ENCODE measurements at regions of chr17 and their contacts with region 1.

Region 1: GRCh38 chr17:60231234-60231633 is 81.5 kb downstream of the CA4 start:
- DNase-seq: no peak
- ATAC-seq: no peak
- H3K4me3 Mint-ChIP-seq: no peak overlapping the region
- H3K27ac Mint-ChIP-seq: no peak overlapping the region
- H3K4me1 Mint-ChIP-seq: no peaks in the 10 kb centered on the region
- H3K27me3 Mint-ChIP-seq: no peaks in the 10 kb centered on the region

Region 2: GRCh38 chr17:60142872-60143499 is 88.2 kb before region 1 on chr17:
- CTCF ChIA-PET with region 1: interaction called, 14 read pairs
- POLR2A ChIA-PET with region 1: no interaction called
- DNase-seq: peak; percentile 89
- ATAC-seq: peak; percentile 80
- H3K4me3 Mint-ChIP-seq: no peak overlapping the region
- H3K27ac Mint-ChIP-seq: no peak overlapping the region
- H3K4me1 Mint-ChIP-seq: peaks cover 26% of the 10 kb centered on the region
- H3K27me3 Mint-ChIP-seq: peaks cover 88% of the 10 kb centered on the region

Region 3: DNA sequence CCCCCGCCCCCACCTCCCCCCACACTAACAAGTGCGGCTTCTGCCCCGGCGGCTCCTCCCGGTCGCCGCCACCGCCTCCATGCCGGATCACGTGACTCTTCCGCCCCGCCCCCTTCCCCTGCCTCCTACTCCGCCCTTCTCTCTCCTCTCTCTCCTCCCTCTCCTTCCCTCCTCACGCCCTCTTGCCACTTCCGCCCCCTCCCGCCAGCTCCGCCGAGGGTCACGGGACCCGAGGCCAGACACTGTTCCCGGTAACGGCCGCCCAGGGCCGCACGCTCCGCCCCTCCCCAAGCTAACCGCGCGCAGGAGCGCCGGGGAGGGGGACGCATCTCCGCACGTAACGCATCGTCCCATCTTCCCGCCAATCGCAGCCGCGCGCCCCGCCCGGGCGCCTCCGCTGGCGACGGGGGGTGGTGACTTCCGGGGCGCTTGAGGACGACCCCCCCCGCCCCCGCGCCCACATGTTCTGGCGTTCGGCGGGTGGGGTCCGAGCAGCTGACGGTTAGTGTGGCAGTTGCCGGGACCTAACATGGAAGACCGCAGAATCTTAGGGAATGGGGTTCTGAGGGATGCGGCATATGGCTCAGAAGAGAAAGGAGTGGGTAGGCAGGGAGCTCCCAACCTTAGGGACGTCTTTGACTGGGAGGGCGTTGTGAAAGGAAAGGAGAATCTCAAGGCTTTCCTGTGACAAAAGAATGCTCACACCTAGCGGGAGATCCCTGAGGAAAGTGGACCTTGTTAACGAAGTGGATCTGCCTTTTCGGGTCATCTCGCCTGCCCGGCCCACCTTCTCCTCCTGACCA is 161.0 kb after region 1 on chr17 and contains the start of gene USP32:
- CTCF ChIA-PET with region 1: interaction called, 11 read pairs
- POLR2A ChIA-PET with region 1: no interaction called
- DNase-seq: peak; percentile 99
- ATAC-seq: peak; percentile 89
- H3K4me3 Mint-ChIP-seq: peak within 1 kb of the TSS; percentile 94
- H3K27ac Mint-ChIP-seq: peak within 1 kb of the TSS; percentile 99
- H3K4me1 Mint-ChIP-seq: peaks cover 49% of the 10 kb centered on the region
- H3K27me3 Mint-ChIP-seq: no peaks in the 10 kb centered on the region
- total RNA-seq, gene USP32: 36.7 to 44.0 TPM

Region 4: GRCh38 chr17:60421273-60421934 is 190.2 kb after region 1 on chr17:
- CTCF ChIA-PET with region 1: interaction called, 11 read pairs
- POLR2A ChIA-PET with region 1: no interaction called
- DNase-seq: peak; percentile 84
- ATAC-seq: peak; percentile 99
- H3K4me3 Mint-ChIP-seq: peak overlapping the region; percentile 59
- H3K27ac Mint-ChIP-seq: peak overlapping the region; percentile 55
- H3K4me1 Mint-ChIP-seq: peaks cover 4% of the 10 kb centered on the region
- H3K27me3 Mint-ChIP-seq: no peaks in the 10 kb centered on the region

Region 5: GRCh38 chr17:60514053-60514452 is 282.8 kb after region 1 on chr17:
- CTCF ChIA-PET with region 1: no interaction called
- POLR2A ChIA-PET with region 1: no interaction called
- DNase-seq: no peak
- ATAC-seq: no peak
- H3K4me3 Mint-ChIP-seq: no peak overlapping the region
- H3K27ac Mint-ChIP-seq: no peak overlapping the region
- H3K4me1 Mint-ChIP-seq: peaks cover 3% of the 10 kb centered on the region
- H3K27me3 Mint-ChIP-seq: no peaks in the 10 kb centered on the region